Posterior vena cava (tissue), 2 donors: ENCODE measurements at regions of chr11 and their contacts with region 1.

Region 1: DNA sequence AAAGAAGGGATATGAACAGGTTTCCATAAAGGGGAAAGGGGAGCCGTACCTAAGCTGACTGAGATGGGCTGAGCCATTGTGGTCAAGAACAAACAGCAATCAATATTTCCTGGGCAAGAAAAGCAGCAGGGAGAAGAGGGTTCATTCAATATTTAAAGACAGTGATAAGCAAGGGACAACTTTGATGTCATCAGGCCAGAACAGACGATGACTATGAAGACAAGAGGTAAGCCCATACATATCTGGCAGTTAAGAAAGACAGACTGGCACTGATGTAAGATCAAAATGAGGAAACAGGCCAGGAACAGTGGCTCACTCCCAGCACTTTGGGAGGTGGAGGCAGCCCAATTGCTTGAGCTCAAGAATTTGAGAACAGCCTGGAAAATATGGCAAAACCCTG is 2.4 kb downstream of the OR5A2 start:
- DNase-seq: no peak

Region 2: DNA sequence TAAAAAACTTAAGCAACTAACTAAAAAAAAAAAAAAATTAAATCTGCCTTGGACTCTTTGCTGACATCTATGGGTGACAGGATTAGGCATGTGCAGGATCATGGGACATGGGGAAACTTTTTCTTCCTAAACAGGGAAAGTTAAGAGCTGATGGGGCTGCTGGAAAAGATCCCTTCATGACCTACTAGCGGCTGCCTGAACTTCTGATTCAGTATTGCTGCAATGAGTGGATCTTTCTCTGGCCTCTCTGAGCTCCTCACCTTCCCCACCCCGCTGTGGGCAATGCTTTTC is 22.6 kb before region 1 on chr11:
- intact Hi-C with region 1: loop called in 1 of 2 experiments (anchors 2 kb)
- DNase-seq: no peak